Activated CD8-positive, alpha-beta memory T cell treated with anti-CD3 and anti-CD28 coated beads, Interleukin-2, amount 10 ng/mL, durations not matched to agents 7 days and 5 days (primary cell): ENCODE measurements at regions of chr6 and their contacts with region 1.

Region 1: DNA sequence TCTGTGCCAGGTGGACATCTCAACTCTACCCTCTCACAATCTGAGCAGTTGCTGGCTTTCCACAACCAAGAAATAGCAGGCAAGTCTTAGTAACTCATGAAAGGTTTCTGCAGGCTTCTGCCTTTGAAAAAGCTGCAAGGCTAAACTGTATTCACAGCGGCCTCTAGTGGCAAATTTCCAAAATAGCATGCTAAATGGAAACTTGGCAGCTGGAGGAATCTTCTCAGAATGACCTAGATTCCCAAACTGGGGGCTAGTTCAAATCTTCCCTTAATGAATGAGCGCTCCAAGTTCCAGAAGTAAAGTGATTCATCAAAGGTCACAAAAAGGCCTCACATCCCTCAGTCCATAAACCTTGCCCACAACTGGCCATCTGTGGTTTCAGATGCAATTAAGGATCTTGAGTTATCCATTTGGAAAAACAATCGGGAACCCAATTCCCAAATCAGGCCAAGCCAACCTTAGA is 11.9 kb upstream of the CPNE5 start:
- DNase-seq: peak; percentile 57
- ATAC-seq: no peak
- H3K4me3 Mint-ChIP-seq: no peak overlapping the region
- H3K27ac Mint-ChIP-seq: no peak overlapping the region
- H3K4me1 Mint-ChIP-seq: peaks cover 4% of the 10 kb centered on the region
- H3K27me3 Mint-ChIP-seq: no peaks in the 10 kb centered on the region

Region 2: DNA sequence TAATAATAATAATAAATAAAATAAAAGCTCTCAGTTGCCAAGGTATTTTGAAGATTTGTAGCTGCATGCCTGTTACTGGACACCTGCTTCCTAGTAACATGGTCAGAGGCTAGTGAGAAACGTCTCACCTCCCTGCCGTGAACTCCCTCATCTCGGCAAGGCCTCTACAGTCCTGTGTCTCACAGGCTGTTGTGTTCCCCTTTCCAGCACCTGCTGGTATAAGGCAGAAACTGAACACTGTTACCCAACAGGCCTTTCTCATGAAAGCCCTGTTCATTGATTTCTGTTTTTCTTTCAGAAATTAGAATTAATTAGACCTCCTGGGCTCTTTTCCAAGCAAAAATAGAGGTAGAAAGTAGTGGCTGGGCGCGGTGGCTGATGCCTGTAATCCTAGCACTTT is 274.6 kb before region 1 on chr6:
- CTCF ChIA-PET with region 1: no interaction called
- DNase-seq: no peak
- ATAC-seq: no peak
- H3K4me3 Mint-ChIP-seq: no peak overlapping the region
- H3K27ac Mint-ChIP-seq: no peak overlapping the region
- H3K4me1 Mint-ChIP-seq: peaks cover 6% of the 10 kb centered on the region
- H3K27me3 Mint-ChIP-seq: no peaks in the 10 kb centered on the region

Region 3: GRCh38 chr6:36765594-36766398 is 85.4 kb before region 1 on chr6:
- CTCF ChIA-PET with region 1: interaction called, 131 read pairs
- DNase-seq: peak; percentile 90
- ATAC-seq: peak; percentile 93
- H3K4me3 Mint-ChIP-seq: no peak overlapping the region
- H3K27ac Mint-ChIP-seq: no peak overlapping the region
- H3K4me1 Mint-ChIP-seq: peaks cover 37% of the 10 kb centered on the region
- H3K27me3 Mint-ChIP-seq: no peaks in the 10 kb centered on the region

Region 4: DNA sequence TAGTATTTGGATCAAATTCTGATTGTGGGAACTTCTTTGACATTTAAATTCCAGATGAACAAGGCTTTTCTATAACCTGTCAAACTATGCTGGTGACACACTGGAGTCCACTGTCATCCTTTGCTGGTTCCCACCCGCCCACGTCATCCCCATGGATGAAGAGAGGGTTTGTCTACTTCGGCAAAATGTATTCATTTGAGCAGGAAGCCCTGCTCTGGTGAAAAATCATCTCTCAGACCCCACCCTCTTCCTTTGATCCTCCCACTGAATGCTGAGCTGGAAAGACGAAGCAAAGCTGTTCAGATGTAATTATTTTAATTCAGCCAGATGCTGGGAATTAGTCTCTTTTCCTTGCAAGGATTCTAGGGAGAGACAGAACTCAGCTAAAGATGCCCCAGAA is 62.4 kb before region 1 on chr6:
- CTCF ChIA-PET with region 1: interaction called, 80 read pairs
- DNase-seq: no peak
- ATAC-seq: no peak
- H3K4me3 Mint-ChIP-seq: no peak overlapping the region
- H3K27ac Mint-ChIP-seq: no peak overlapping the region
- H3K4me1 Mint-ChIP-seq: no peaks in the 10 kb centered on the region
- H3K27me3 Mint-ChIP-seq: peaks cover 50% of the 10 kb centered on the region

Region 5: GRCh38 chr6:36829919-36830544 is 21.1 kb before region 1 on chr6:
- CTCF ChIA-PET with region 1: interaction called, 13 read pairs
- DNase-seq: no peak
- ATAC-seq: no peak
- H3K4me3 Mint-ChIP-seq: no peak overlapping the region
- H3K27ac Mint-ChIP-seq: no peak overlapping the region
- H3K4me1 Mint-ChIP-seq: peaks cover 13% of the 10 kb centered on the region
- H3K27me3 Mint-ChIP-seq: peaks cover 14% of the 10 kb centered on the region

Region 6: GRCh38 chr6:36836111-36837021 is 14.8 kb before region 1 on chr6:
- CTCF ChIA-PET with region 1: interaction called, 13 read pairs
- DNase-seq: no peak
- ATAC-seq: no peak
- H3K4me3 Mint-ChIP-seq: no peak overlapping the region
- H3K27ac Mint-ChIP-seq: no peak overlapping the region
- H3K4me1 Mint-ChIP-seq: peaks cover 15% of the 10 kb centered on the region
- H3K27me3 Mint-ChIP-seq: peaks cover 52% of the 10 kb centered on the region

Region 7: GRCh38 chr6:36865835-36866234 is 14.7 kb after region 1 on chr6:
- CTCF ChIA-PET with region 1: interaction called, 69 read pairs
- DNase-seq: no peak
- ATAC-seq: no peak
- H3K4me3 Mint-ChIP-seq: no peak overlapping the region
- H3K27ac Mint-ChIP-seq: no peak overlapping the region
- H3K4me1 Mint-ChIP-seq: peaks cover 68% of the 10 kb centered on the region
- H3K27me3 Mint-ChIP-seq: no peaks in the 10 kb centered on the region

Region 8: DNA sequence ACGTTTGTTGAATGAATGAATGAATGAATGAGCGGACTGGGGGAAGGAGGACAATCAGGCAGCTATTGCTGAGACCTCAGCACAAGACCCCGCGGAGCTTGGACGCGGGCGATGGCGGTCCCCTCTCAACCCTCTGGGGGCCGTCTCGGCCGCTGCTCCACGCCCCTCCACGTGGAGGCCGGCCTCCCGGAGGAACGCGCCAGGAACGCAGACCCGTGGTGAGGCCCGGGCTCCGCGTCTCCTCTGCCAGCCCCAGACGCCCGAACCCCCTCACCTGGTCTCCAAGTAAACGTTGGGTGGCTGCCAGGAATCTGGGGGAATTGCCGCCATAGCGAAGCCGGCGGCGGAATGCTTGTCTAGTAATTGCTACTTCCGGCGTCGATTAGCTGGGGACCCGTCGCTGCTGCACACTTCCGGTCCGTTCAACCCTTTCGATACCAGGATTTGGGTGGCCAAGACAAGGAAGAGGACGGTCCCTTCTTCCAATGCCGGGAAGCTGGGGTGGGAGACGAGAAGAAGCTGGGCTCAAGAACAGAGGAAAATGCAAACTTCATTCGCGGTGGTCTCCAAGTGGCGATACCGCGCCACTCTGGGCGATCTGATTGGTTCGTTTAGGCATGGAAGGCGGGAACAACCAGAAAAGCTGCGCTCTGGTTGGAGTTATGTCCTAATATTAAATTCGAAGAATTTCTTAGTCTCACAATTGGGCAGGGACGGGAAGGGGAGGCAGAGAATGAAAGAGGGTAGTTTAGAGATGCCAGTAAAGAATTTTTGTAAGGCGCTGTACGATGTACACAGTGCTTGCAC is 23.5 kb after region 1 on chr6 and contains the start of gene PPIL1:
- CTCF ChIA-PET with region 1: interaction called, 69 read pairs
- DNase-seq: peak; percentile 89
- ATAC-seq: peak; percentile 90
- H3K4me3 Mint-ChIP-seq: peak within 1 kb of the TSS; percentile 99
- H3K27ac Mint-ChIP-seq: peak within 1 kb of the TSS; percentile 100
- H3K4me1 Mint-ChIP-seq: peaks cover 53% of the 10 kb centered on the region
- H3K27me3 Mint-ChIP-seq: peaks cover 2% of the 10 kb centered on the region
- total RNA-seq, gene PPIL1: 30.8 to 39.9 TPM